ENCODE measurements at regions of chr3 and their contacts with region 1.

Region 1: GRCh38 chr3:38154033-38154494 is 11.3 kb upstream of the OXSR1 start:
- DNase-seq: no peak
- ATAC-seq: no peak
- H3K4me3 ChIP-seq: no peak overlapping the region
- H3K27ac ChIP-seq: no peak overlapping the region; the same call in 1 of the 2 replicates
- H3K4me1 ChIP-seq: peaks cover 7% of the 10 kb centered on the region; the same call in 1 of the 2 replicates
- H3K27me3 ChIP-seq: no peaks in the 10 kb centered on the region
- CTCF ChIP-seq: no peak
- EP300 ChIP-seq: no peak
- POLR2A ChIP-seq: no peak
- RAD21 ChIP-seq: no peak

Region 2: DNA sequence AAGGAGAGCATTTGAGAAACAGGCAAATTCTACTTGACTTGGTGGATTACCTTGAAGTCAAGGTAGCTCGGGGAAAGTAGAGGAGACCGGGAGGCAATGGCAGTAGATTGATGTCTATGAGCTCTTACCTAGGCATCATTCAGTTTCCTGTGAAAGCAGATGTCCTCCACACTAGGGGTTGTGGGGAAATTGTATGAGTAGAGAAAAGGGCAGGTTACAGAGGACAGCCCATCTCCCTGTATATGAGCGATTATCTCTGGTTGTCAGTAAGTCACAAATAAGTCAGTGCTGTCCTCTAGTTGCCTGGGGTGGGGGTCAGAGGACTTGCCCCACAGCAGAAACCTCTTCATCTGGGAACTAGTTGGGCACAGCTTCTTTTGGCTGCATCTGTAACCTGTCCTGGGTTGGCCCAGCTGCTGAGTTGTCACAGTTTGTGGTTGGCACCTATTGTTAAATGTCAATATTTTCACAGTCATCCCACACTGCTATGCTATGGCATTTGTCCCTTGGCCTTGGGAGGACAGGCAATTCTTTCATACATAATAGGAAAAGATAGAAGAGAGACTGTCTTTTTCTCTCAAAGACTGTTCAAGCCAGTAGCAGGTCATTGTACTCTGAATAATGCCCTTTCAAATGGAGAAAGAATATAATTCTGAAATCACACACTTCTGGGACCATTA is 926.1 kb before region 1 on chr3:
- CTCF ChIA-PET with region 1: no interaction called
- POLR2A ChIA-PET with region 1: no interaction called
- RAD21 ChIA-PET with region 1: no interaction called
- SMC1A ChIA-PET with region 1: no interaction called
- in situ Hi-C with region 1: no loop called
- intact Hi-C with region 1: no loop called
- DNase-seq: no peak
- ATAC-seq: no peak
- H3K4me3 ChIP-seq: no peak overlapping the region
- H3K27ac ChIP-seq: no peak overlapping the region
- H3K4me1 ChIP-seq: no peaks in the 10 kb centered on the region
- H3K27me3 ChIP-seq: no peaks in the 10 kb centered on the region
- CTCF ChIP-seq: no peak
- EP300 ChIP-seq: no peak
- POLR2A ChIP-seq: no peak
- RAD21 ChIP-seq: no peak

Region 3: DNA sequence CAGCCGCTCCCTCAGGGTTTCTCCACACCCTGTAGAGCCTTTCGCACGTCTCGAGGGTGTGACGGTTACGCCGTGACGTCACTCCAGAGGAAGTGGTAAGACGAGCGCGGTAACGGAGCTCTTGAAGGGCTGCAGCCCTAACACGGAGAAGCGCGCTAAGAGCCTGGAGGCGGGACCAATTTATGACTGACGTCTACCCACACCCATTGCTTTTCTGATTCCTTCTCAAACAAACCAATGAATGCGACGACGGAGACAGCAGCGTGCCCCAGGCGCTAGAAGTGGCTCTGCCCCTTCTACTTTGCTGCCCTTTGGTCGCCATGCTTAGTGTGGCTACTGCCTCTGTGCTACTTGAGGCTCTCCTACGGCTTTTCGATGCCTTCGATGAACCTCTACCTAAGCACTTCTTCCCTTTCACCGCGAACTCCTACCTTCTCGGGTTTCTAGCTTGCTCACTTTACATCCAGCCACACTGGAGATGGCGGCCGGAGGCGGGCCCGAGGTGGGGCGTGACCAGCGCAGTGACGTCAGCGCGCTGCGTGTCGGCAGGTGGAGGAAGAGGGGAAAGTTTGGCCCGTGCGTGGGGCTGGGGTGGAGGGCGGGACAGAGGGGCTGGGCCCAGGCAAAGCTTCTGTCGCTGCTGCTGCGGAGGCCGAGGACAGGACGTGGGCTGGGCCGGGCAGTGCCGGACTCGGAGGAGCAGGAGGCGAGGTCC is 11.1 kb after region 1 on chr3 and contains the start of gene OXSR1:
- CTCF ChIA-PET with region 1: interaction called, 55 read pairs
- POLR2A ChIA-PET with region 1: interaction called, 100 read pairs
- RAD21 ChIA-PET with region 1: interaction called, 26 read pairs
- SMC1A ChIA-PET with region 1: interaction called, 64 read pairs
- in situ Hi-C with region 1: no loop called
- intact Hi-C with region 1: no loop called
- DNase-seq: peak; percentile 100
- ATAC-seq: peak; percentile 89
- H3K4me3 ChIP-seq: peak within 1 kb of the TSS; percentile 92
- H3K27ac ChIP-seq: peak within 1 kb of the TSS; percentile 100
- H3K4me1 ChIP-seq: peaks cover 4% of the 10 kb centered on the region; the same call in 1 of the 2 replicates
- H3K27me3 ChIP-seq: no peaks in the 10 kb centered on the region
- CTCF ChIP-seq: no peak
- EP300 ChIP-seq: no peak; a peak in 1 of 4 replicates
- POLR2A ChIP-seq: peak; percentile 93
- RAD21 ChIP-seq: no peak
- polyA plus RNA-seq, gene OXSR1: 12.4 to 16.9 TPM

Region 4: GRCh38 chr3:38173834-38174418 is 19.9 kb after region 1 on chr3:
- CTCF ChIA-PET with region 1: interaction called, 3 read pairs
- POLR2A ChIA-PET with region 1: interaction called, 6 read pairs
- RAD21 ChIA-PET with region 1: no interaction called
- SMC1A ChIA-PET with region 1: interaction called, 14 read pairs
- in situ Hi-C with region 1: no loop called
- intact Hi-C with region 1: no loop called
- DNase-seq: no peak
- ATAC-seq: peak; percentile 64
- H3K4me3 ChIP-seq: peak overlapping the region; percentile 54
- H3K27ac ChIP-seq: peak overlapping the region; percentile 2; the same call in 1 of the 2 replicates
- H3K4me1 ChIP-seq: peaks cover 30% of the 10 kb centered on the region
- H3K27me3 ChIP-seq: no peaks in the 10 kb centered on the region
- CTCF ChIP-seq: no peak
- EP300 ChIP-seq: no peak
- POLR2A ChIP-seq: no peak
- RAD21 ChIP-seq: no peak